Right ventricle myocardium superior (tissue), 1 donor: ENCODE measurements at regions of chrX and their contacts with region 1.

Region 1: GRCh38 chrX:48972220-48973167 is 850 bp upstream of the KCND1 start:
- DNase-seq: peak; percentile 49
- ATAC-seq: peak; percentile 69

Region 2: GRCh38 chrX:49039598-49040375 is 67.3 kb after region 1 on chrX:
- intact Hi-C with region 1: loop called (anchors 10 kb)
- DNase-seq: peak; percentile 72
- ATAC-seq: peak; percentile 21

Region 3: DNA sequence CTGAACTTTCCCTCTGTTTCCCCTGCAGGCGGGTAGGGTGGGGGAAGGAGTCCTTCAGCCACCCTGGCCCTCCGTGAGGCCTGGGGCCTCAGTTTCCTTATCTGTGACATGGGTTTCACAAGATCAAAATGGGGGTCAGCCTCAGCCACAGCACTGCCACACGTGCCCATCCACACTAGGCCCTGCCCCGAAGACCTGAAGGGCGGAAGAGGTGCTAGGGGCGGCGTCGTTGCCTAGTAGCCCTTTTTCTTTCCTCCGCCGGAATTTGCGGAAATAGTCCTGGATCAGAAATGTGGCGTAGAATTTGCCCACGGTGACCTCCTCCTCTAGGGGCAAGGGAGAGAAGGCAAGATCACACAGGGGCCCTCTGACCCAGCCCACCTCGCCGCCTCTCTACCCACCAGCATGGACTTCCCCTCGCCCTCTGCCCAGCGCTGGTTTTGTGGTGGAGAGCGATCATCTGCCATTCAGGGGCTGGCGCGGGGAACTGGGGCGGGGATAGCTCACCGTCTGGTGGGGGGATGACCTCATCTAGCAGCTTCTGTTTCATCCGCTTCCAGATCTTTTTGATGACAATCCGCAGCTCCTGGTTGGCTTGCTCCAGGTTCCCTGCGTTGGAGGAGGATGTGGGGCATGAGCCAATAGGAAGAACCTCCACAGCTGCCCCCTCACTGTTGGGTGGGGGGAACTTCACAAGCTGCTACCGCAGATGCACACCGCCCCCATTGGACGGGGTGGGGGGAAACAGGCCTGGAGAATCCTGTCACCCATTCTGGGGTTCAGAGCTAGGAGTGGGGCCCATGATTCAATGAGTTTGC is 237.1 kb after region 1 on chrX:
- intact Hi-C with region 1: no loop called
- DNase-seq: no peak
- ATAC-seq: no peak